ENCODE measurements at regions of chr10 and their contacts with region 1.

Region 1: GRCh38 chr10:63629363-63630084 is 108.3 kb downstream of the REEP3 start:
- DNase-seq: peak; percentile 97
- H3K4me3 ChIP-seq: peak overlapping the region; percentile 43 to 72 (median 63)
- H3K27ac ChIP-seq: peak overlapping the region; percentile 97
- H3K4me1 ChIP-seq: peaks cover 30% of the 10 kb centered on the region
- H3K27me3 ChIP-seq: no peaks in the 10 kb centered on the region
- CTCF ChIP-seq: peak; percentile 86 to 87

Region 2: DNA sequence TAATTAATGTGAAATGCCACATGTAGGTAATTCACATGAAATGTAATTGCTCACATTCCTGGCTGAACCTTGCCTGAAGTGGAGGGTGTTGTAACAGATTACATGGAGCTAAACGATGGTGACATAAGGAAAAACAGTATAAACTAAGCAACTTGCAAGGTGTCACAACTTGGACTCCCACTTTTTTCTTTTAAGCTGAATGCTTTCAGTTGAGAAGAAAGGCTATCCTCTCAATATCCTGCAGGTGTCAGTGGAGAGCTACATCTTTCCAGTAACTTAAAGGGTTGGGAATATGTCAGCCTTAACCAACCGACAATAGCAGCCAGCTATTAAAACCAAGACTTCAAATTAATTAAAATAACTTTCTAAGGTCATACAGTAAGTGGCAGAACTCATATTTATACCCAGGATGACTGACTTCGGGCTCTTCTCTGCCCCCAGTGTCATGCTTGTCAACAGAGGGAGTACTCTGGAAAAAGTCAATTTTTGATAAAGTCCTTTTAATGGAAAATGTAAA is 462.7 kb before region 1 on chr10:
- CTCF ChIA-PET with region 1: interaction called, 12 read pairs
- dilution Hi-C with region 1: no loop called
- in situ Hi-C with region 1: no loop called
- intact Hi-C with region 1: loop called (anchors 1 kb)
- DNase-seq: peak; percentile 59
- H3K4me3 ChIP-seq: no peak overlapping the region
- H3K27ac ChIP-seq: no peak overlapping the region
- H3K4me1 ChIP-seq: no peaks in the 10 kb centered on the region
- H3K27me3 ChIP-seq: no peaks in the 10 kb centered on the region
- CTCF ChIP-seq: peak; percentile 72 to 75

Region 3: DNA sequence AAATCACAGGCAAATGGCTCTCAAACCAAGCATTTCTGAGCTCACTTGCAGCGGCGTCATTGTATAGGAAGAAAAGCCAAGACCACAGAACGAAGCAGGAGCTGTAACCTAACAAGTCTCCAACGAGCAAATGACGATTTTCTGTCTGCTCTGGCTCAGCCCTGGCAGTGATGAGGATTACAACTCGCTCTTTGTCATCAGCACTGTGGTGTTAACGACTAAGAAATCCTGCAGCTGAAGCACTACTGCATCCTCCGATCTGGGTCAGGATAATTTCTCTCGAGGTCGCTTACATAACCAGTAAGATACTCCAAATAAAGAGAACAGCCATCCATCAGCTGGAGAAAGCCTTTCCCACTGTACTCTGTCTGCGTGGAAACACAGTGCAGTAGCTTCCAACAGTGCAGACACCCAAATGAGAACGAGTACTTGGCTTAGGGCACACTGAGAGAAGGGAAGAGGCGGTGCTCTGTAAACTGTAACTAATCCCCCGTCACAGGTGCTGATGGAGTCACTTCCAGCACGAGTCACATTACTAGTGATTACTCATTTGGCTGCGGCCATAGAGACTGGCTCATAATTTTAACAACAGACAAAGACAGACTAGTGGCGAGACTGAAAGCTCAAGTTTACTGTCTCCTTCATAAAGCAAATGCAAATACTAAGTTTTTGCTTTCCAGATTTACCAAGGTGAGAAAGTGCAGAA is 360.6 kb before region 1 on chr10:
- CTCF ChIA-PET with region 1: interaction called, 5 read pairs
- dilution Hi-C with region 1: no loop called
- in situ Hi-C with region 1: no loop called
- intact Hi-C with region 1: loop called (anchors 1 kb)
- DNase-seq: peak; percentile 96
- H3K4me3 ChIP-seq: peak overlapping the region; percentile 49 to 100 (median 97)
- H3K27ac ChIP-seq: peak overlapping the region; percentile 98
- H3K4me1 ChIP-seq: peaks cover 5% of the 10 kb centered on the region
- H3K27me3 ChIP-seq: no peaks in the 10 kb centered on the region
- CTCF ChIP-seq: peak; percentile 32 to 41

Region 4: DNA sequence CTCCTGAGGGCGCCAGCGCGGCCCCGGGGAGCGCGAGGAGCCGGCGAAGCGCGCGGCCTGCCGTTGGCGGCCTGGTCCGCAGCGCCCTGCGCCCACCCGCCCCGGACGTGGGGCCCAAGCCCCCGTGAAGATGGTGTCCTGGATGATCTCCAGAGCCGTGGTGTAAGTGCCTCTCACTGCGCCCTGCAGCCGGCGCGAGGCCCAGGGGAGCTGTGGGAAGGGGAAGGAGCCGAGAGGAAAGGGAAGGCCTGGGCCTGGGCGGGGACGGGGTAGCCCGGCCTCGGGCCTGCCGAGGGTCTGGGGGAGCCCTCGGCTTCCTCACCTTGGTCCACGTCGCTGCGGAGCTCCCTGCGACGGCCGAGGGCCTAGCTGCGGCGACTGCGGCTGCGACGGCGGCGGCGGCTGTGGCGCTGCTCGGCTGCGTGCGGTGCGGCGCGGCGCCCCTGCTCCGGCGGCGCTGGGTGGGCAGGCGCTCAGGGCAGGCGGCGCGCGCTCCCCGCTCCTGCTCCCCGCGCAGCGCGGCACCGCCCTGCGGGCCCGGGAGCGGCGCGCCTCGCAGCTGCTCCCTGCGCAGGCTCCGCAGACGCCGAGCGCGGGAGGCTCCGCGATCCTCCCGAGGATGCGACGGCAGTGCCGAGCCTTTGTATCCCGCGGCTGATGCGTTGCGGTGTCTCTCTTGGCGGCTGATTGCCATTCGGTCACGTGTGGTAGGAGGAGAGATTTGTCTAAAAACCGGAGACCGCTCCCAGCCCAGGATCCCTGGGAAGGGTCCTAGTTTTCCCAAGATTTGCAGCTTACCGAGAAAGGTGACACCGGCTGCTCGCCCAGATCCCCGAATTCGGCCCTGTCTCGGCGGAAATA is 107.9 kb before region 1 on chr10:
- CTCF ChIA-PET with region 1: no interaction called
- dilution Hi-C with region 1: no loop called
- in situ Hi-C with region 1: no loop called
- intact Hi-C with region 1: loop called (anchors 1 kb)
- DNase-seq: peak; percentile 66
- H3K4me3 ChIP-seq: peak overlapping the region; percentile 91 to 95 (median 92)
- H3K27ac ChIP-seq: peak overlapping the region; percentile 90
- H3K4me1 ChIP-seq: peaks cover 27% of the 10 kb centered on the region
- H3K27me3 ChIP-seq: no peaks in the 10 kb centered on the region
- CTCF ChIP-seq: no peak

Region 5: DNA sequence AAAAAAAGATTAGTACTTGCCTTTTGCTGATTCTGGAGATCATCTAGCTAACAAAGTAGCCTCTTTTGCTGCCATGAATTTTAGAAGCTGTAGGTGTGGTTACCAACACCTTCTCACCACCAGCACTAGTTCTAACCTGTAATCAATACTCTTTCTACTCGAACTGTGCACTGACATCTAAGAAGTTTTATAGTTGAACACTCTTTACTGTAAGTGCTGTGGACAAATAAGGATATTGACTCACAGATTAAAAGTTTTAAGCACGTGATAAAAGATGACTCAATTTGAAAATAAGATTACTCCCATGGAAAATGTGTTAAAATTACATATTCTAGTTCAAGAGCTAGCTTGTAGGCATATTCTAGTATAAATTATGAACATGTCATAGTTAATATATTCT is 18.4 kb before region 1 on chr10:
- CTCF ChIA-PET with region 1: no interaction called
- dilution Hi-C with region 1: no loop called
- in situ Hi-C with region 1: no loop called
- intact Hi-C with region 1: no loop called
- DNase-seq: peak; percentile 41
- H3K4me3 ChIP-seq: no peak overlapping the region
- H3K27ac ChIP-seq: no peak overlapping the region
- H3K4me1 ChIP-seq: peaks cover 6% of the 10 kb centered on the region
- H3K27me3 ChIP-seq: no peaks in the 10 kb centered on the region
- CTCF ChIP-seq: no peak

Region 6: DNA sequence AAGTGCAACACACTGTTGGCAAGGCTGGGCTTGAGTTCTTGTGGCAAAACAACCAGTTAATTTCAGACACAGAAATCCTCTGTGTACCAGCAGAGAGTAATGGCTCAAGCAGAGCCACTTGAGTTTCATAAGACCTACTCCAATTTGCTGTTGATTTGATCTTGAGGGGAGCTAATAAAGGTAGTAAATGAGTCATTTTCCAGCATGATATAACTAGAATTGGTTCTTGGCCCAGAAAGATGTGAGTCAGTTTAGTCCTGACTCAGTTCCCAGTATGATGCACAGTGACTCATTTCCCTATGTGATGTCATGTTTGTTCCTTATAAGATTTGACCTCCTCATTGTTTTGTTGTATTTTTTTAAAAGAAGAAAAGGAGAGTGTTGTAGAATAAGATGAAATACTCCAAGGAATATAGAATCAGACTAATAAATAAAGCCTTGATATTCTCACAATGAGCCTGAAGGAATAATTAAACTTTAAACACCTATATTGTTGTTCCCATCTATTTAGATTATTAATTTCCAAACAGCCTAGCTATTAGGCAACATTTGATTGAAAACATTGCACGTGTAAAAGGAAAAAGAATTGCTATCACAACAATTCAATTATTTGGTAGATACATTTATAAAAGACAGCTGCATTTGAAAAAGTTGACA is 77.9 kb after region 1 on chr10:
- CTCF ChIA-PET with region 1: no interaction called
- dilution Hi-C with region 1: loop called (anchors 5 kb)
- in situ Hi-C with region 1: loop called (anchors 5 kb)
- intact Hi-C with region 1: loop called (anchors 1 kb)
- DNase-seq: peak; percentile 99
- H3K4me3 ChIP-seq: no peak overlapping the region
- H3K27ac ChIP-seq: peak overlapping the region; percentile 80
- H3K4me1 ChIP-seq: peaks cover 31% of the 10 kb centered on the region
- H3K27me3 ChIP-seq: no peaks in the 10 kb centered on the region
- CTCF ChIP-seq: no peak

Region 7: GRCh38 chr10:63767138-63767801 is 137.7 kb after region 1 on chr10:
- CTCF ChIA-PET with region 1: no interaction called
- dilution Hi-C with region 1: no loop called
- in situ Hi-C with region 1: no loop called
- intact Hi-C with region 1: loop called (anchors 1 kb)
- DNase-seq: peak; percentile 8
- H3K4me3 ChIP-seq: no peak overlapping the region
- H3K27ac ChIP-seq: no peak overlapping the region
- H3K4me1 ChIP-seq: peaks cover 28% of the 10 kb centered on the region
- H3K27me3 ChIP-seq: no peaks in the 10 kb centered on the region
- CTCF ChIP-seq: peak; percentile 27 to 39

Measured in mammary epithelial cell (primary cell).